WTC11 (cell line): ENCODE measurements at regions of chr10 and their contacts with region 1.

Region 1: DNA sequence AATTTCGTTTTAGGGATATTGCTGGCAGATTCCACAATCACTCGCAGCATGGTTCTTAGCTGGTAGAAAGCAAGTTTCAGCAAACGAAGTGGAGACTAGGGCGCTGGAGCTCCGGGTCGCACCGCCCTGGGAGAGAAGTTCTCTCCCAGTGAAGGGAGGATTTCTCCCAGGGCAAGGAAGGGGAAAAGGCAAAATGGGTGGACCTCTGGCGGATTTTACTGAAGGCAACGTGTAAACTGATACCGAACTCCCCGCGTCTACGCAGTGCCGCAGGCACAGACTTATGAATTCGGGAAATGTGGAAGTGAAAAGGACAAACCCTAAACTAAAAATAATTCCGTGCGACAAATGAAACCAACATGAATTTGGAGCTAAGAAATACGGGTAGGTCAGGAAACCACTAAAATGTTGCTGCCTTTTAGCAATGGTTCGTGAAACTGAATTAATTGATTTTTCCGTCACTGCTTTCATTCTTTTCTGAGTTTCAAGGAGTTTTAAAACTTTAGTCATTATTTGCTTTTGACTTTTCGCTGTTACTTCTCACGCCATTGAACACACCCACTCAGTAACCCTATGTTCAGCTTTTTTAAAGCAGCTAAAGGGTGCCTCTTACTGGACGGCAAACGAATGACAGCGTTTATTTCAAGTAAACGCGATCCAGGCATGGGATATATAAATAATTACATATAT is at the start of gene MYOF:
- DNase-seq: peak; percentile 35
- ATAC-seq: peak; percentile 76
- H3K4me3 Mint-ChIP-seq: peak within 1 kb of the TSS; percentile 86
- H3K27ac Mint-ChIP-seq: 0 out of 2 replicates have a peak within 1 kb of the TSS, but pooled peaks have one; percentile 17
- H3K4me1 Mint-ChIP-seq: peaks cover 18% of the 10 kb centered on the region
- H3K27me3 Mint-ChIP-seq: peaks cover 16% of the 10 kb centered on the region
- CTCF ChIP-seq: no peak; the same call in 1 of the 2 replicates
- total RNA-seq, gene MYOF: 1.4 to 2.2 TPM (median 1.8 TPM) in 3 replicates

Region 2: GRCh38 chr10:93352638-93353383 is 129.5 kb before region 1 on chr10:
- CTCF ChIA-PET with region 1: interaction called, 19 read pairs
- POLR2A ChIA-PET with region 1: no interaction called
- DNase-seq: no peak
- ATAC-seq: peak; percentile 70
- H3K4me3 Mint-ChIP-seq: no peak overlapping the region
- H3K27ac Mint-ChIP-seq: no peak overlapping the region
- H3K4me1 Mint-ChIP-seq: peaks cover 15% of the 10 kb centered on the region
- H3K27me3 Mint-ChIP-seq: no peaks in the 10 kb centered on the region; the same call in 1 of the 2 replicates
- CTCF ChIP-seq: peak; percentile 54

Region 3: DNA sequence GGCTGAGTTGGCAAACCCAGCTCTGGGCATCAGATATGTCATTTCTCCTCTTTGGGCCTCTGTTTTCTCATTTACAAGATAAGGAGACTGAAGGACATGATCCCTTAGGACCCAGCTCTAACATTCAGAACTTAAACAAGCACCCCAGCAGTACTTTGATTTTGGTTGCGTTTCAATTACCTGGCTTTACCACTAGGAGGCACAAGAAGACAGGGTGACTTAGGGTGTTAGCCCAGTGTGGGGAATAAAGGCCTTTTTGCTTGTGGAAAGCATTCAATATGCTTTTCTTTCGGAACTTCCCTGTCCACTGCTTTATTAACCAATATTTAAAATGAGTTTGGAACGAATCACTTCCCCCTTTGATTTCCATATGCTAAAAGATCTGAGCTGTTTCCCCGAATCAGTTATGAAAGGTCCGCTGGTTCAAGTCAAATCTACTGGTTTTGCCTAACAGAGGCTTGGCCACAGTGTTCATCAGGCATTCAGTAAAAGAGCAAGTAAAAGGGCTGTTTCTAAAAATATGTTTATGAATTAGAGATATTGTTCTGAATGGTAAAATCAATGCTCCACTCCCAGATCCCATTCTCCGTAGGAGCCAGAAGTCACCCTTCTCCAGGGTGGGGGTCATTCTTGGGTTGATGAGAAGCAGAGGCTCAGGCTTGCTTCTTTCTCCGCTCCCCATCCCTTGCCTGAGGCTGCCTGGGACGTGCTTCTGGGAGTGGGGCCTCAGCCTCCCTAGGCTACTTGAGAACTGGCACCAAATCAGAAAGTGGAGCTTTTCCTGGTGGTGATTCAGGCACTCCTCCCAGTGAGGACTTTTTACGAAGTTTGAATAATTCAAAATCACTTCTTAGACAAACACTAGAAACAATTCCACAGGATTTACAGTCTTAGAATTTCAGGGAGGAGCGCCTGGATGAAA is 105.7 kb before region 1 on chr10:
- CTCF ChIA-PET with region 1: interaction called, 311 read pairs
- POLR2A ChIA-PET with region 1: interaction called, 3 read pairs
- DNase-seq: no peak
- ATAC-seq: peak; percentile 90
- H3K4me3 Mint-ChIP-seq: no peak overlapping the region
- H3K27ac Mint-ChIP-seq: no peak overlapping the region
- H3K4me1 Mint-ChIP-seq: peaks cover 4% of the 10 kb centered on the region; the same call in 1 of the 2 replicates
- H3K27me3 Mint-ChIP-seq: no peaks in the 10 kb centered on the region
- CTCF ChIP-seq: peak; percentile 93

Region 4: DNA sequence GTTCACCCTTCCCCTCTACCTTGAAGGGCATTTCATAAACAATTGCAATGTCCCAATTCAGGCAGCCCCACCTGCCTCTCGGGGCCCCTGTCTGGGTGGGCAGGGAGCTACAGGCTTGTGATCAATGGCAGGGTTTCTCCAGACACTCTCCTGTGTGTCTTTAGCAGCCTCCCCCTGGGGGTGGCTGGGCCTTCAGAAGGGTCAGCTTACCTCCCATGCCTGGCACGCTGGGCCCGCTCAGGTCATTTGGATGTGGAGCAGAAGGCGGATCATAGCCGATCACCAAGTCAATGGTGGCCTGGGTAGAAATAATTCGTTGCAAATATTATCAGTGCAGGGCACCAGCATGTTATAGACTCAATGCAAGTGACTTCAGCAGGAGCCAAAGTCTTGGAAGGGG is 56.4 kb before region 1 on chr10:
- CTCF ChIA-PET with region 1: interaction called, 25 read pairs
- POLR2A ChIA-PET with region 1: no interaction called
- DNase-seq: no peak
- ATAC-seq: no peak
- H3K4me3 Mint-ChIP-seq: no peak overlapping the region
- H3K27ac Mint-ChIP-seq: no peak overlapping the region; the same call in 1 of the 2 replicates
- H3K4me1 Mint-ChIP-seq: peaks cover 16% of the 10 kb centered on the region
- H3K27me3 Mint-ChIP-seq: no peaks in the 10 kb centered on the region
- CTCF ChIP-seq: no peak

Region 5: GRCh38 chr10:93458821-93459257 is 23.5 kb before region 1 on chr10:
- CTCF ChIA-PET with region 1: interaction called, 22 read pairs
- POLR2A ChIA-PET with region 1: no interaction called
- DNase-seq: no peak
- ATAC-seq: peak; percentile 74
- H3K4me3 Mint-ChIP-seq: no peak overlapping the region
- H3K27ac Mint-ChIP-seq: no peak overlapping the region; the same call in 1 of the 2 replicates
- H3K4me1 Mint-ChIP-seq: peaks cover 12% of the 10 kb centered on the region
- H3K27me3 Mint-ChIP-seq: no peaks in the 10 kb centered on the region
- CTCF ChIP-seq: no peak

Region 6: DNA sequence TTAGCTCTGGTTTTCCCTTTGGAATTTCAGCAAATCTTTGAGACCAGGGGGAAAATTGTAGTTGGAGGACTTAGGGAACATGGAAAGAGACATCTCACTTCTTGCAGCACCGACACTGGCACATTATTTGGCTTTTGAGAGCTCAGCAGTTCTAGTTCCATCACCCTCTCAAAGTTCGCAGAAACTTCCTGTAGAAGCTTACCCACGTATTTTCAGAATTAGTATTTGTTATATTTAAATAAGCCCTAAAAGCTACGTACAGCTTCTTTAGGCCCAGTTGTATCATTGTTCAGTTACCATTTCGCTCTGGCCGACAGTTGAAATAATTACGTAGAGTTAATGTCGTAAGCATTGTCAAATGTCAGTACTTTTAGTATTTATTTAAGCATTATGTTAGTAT is 27.5 kb after region 1 on chr10:
- CTCF ChIA-PET with region 1: interaction called, 30 read pairs
- POLR2A ChIA-PET with region 1: no interaction called
- DNase-seq: no peak
- ATAC-seq: no peak
- H3K4me3 Mint-ChIP-seq: no peak overlapping the region
- H3K27ac Mint-ChIP-seq: no peak overlapping the region
- H3K4me1 Mint-ChIP-seq: peaks cover 5% of the 10 kb centered on the region
- H3K27me3 Mint-ChIP-seq: no peaks in the 10 kb centered on the region
- CTCF ChIP-seq: no peak

Region 7: GRCh38 chr10:93566435-93567276 is 84.4 kb after region 1 on chr10 and contains the start of gene FFAR4:
- CTCF ChIA-PET with region 1: no interaction called
- POLR2A ChIA-PET with region 1: no interaction called
- DNase-seq: peak; percentile 62
- ATAC-seq: peak; percentile 67
- H3K4me3 Mint-ChIP-seq: peak within 1 kb of the TSS; percentile 86
- H3K27ac Mint-ChIP-seq: no peak within 1 kb of the TSS
- H3K4me1 Mint-ChIP-seq: peaks cover 21% of the 10 kb centered on the region
- H3K27me3 Mint-ChIP-seq: peaks cover 83% of the 10 kb centered on the region
- CTCF ChIP-seq: no peak
- total RNA-seq, gene FFAR4: 0.07 to 0.15 TPM in 2 of 3 replicates, not detected in the other